ENCODE measurements at regions of chr19 and their contacts with region 1.

Region 1: GRCh38 chr19:41849067-41849466 is 4.2 kb downstream of the DMRTC2 start:
- DNase-seq: no peak
- ATAC-seq: no peak
- H3K4me3 ChIP-seq: no peak overlapping the region
- H3K27ac ChIP-seq: no peak overlapping the region
- H3K4me1 ChIP-seq: no peaks in the 10 kb centered on the region
- H3K27me3 ChIP-seq: peaks cover 1 to 8% of the 10 kb centered on the region in 2 experiments; a peak in 3 of 4 replicates
- CTCF ChIP-seq: no peak
- EP300 ChIP-seq: no peak
- POLR2A ChIP-seq: no peak
- RAD21 ChIP-seq: no peak

Region 2: DNA sequence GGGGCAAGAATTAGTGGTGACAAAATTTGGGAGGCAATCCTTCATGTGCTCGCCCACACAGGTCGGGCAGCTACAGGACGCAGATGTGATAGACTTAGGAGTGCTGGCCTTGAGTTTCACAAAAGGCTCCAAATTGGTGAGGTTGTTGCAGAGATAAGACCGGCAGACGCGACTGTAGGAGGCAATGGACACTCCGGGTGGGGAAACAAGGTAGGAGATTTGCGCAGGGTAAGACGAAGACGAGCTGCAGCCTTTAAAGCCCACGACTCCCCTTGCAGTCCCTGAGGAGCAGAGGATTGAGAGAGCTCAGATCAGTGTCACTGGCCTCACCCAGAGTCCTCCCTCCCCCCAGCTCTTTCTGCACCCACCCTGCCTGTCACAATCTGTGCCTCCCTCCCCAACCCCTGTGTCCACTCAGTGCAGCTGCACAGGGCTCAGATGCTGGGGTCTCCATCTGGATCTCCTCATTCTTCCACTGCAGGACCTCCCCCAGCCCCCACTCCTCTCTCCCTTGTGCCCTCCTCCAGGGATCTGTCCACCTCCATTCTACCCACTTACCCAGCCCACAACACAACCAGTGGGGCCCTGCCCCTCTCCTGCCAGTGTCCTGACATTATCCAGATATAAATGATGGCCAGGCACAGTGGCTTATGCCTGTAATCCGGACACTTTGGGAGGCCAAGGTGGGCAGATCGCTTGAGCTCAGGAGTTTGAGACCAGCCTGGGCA is 10.9 kb before region 1 on chr19:
- CTCF ChIA-PET with region 1: interaction called, 24 read pairs
- POLR2A ChIA-PET with region 1: no interaction called
- RAD21 ChIA-PET with region 1: no interaction called
- SMC1A ChIA-PET with region 1: no interaction called
- in situ Hi-C with region 1: no loop called
- intact Hi-C with region 1: no loop called
- DNase-seq: no peak
- ATAC-seq: no peak
- H3K4me3 ChIP-seq: no peak overlapping the region
- H3K27ac ChIP-seq: no peak overlapping the region
- H3K4me1 ChIP-seq: no peaks in the 10 kb centered on the region
- H3K27me3 ChIP-seq: peaks cover 2 to 4% of the 10 kb centered on the region in 2 experiments; a peak in 1 of 4 replicates
- CTCF ChIP-seq: no peak
- EP300 ChIP-seq: no peak
- POLR2A ChIP-seq: no peak
- RAD21 ChIP-seq: no peak

Measured in GM12878 (cell line).